ENCODE measurements at regions of chr15 and their contacts with region 1.

Region 1: GRCh38 chr15:40217159-40217824 is 21.6 kb upstream of the PAK6 start:
- DNase-seq: peak; percentile 62
- ATAC-seq: peak; percentile 86
- H3K4me3 Mint-ChIP-seq: no peak overlapping the region
- H3K27ac Mint-ChIP-seq: no peak overlapping the region
- H3K4me1 Mint-ChIP-seq: no peaks in the 10 kb centered on the region
- H3K27me3 Mint-ChIP-seq: no peaks in the 10 kb centered on the region

Region 2: DNA sequence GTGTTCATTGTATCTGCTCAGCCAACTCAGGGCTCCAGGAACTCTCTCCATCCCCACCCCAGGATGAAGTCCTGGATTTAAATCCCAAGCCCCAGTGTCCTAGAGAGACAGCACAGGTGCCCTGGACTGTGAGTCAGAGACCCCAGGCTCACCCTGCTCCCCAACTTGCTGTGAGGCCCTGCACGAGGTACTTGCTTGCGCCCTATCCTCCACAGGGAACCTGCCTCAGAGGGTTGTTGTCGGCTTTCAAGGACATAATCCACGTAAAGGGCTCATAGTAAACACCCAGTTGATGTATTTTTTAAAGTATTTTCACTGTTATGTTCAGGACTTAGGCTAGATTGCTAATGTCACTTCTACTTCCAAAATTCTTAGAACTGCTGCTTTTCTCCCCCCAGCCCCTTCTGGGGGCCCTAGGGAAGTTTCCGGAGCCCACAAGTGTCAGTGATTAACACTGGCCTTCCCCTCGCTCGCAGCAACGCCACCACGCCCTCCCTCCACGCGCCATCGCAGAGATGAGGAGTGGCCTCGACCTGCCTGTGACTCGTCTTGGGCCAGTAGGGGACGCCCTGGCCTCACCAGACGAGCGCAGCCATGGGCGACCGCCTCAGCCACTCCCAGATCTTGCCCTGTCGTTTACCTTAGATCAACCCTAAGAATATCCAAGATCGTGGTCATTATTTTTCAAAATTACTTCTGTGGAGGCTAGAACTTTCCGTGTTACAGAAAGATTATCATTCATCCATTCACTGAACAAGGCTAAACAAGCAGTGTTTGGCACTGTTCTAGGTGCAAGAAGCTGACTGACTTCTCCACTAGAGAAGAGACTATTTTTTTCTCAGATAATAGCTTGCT is 172.3 kb before region 1 on chr15:
- CTCF ChIA-PET with region 1: interaction called, 37 read pairs
- POLR2A ChIA-PET with region 1: no interaction called
- DNase-seq: peak; percentile 88
- ATAC-seq: peak; percentile 92
- H3K4me3 Mint-ChIP-seq: peak overlapping the region; percentile 9
- H3K27ac Mint-ChIP-seq: peak overlapping the region; percentile 53
- H3K4me1 Mint-ChIP-seq: peaks cover 76% of the 10 kb centered on the region
- H3K27me3 Mint-ChIP-seq: no peaks in the 10 kb centered on the region

Region 3: GRCh38 chr15:40150163-40150925 is 66.9 kb before region 1 on chr15:
- CTCF ChIA-PET with region 1: no interaction called
- POLR2A ChIA-PET with region 1: no interaction called
- DNase-seq: no peak
- ATAC-seq: no peak
- H3K4me3 Mint-ChIP-seq: no peak overlapping the region
- H3K27ac Mint-ChIP-seq: no peak overlapping the region
- H3K4me1 Mint-ChIP-seq: no peaks in the 10 kb centered on the region
- H3K27me3 Mint-ChIP-seq: peaks cover 18% of the 10 kb centered on the region

Region 4: GRCh38 chr15:40182358-40183029 is 34.8 kb before region 1 on chr15:
- CTCF ChIA-PET with region 1: interaction called, 19 read pairs
- POLR2A ChIA-PET with region 1: no interaction called
- DNase-seq: no peak
- ATAC-seq: peak; percentile 11
- H3K4me3 Mint-ChIP-seq: no peak overlapping the region
- H3K27ac Mint-ChIP-seq: peak overlapping the region; percentile 80
- H3K4me1 Mint-ChIP-seq: peaks cover 31% of the 10 kb centered on the region
- H3K27me3 Mint-ChIP-seq: no peaks in the 10 kb centered on the region

Region 5: GRCh38 chr15:40204100-40204499 is 13.2 kb before region 1 on chr15:
- CTCF ChIA-PET with region 1: interaction called, 25 read pairs
- POLR2A ChIA-PET with region 1: no interaction called
- DNase-seq: no peak
- ATAC-seq: no peak
- H3K4me3 Mint-ChIP-seq: no peak overlapping the region
- H3K27ac Mint-ChIP-seq: no peak overlapping the region
- H3K4me1 Mint-ChIP-seq: no peaks in the 10 kb centered on the region
- H3K27me3 Mint-ChIP-seq: no peaks in the 10 kb centered on the region

Region 6: DNA sequence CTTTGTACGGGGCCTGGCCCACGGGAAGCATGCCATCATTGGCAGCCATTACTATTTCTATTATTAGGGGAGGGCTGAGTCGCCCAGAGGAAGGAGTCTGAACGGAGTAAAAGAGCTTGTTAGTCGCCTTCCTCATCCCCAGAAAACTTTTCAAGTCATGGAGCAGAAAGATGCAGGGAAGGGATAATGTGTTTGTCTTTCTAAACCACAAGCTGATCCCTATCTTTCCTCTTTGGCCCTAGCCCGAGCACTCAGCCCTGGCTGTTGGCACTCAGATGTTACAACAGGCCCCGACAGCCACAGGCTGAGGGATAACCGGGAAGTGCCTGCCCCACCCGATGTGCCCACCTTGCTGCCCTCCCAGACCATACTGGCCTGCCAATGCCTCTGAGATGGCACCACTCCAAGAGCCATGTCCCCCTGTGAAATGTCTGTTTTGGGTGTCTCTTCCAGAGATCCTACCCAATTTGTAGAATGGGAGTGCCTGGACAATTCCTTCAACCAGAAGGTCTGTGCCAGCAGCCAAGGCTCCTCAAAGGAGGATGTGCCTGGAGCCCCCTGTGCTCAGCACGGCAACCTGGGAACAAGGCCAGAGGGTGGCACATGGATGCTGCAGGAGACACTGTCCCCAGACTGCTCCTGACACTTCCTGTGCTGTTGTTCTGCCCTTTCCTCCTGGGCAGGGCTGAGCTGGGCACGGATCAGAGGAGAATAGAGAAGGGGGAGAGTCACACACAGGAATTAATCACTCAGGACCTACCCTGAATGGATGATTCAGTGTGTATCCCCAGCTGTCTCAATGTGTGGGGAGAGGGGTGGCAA is 32.4 kb after region 1 on chr15:
- CTCF ChIA-PET with region 1: interaction called, 16 read pairs
- POLR2A ChIA-PET with region 1: no interaction called
- DNase-seq: no peak
- ATAC-seq: no peak
- H3K4me3 Mint-ChIP-seq: no peak overlapping the region
- H3K27ac Mint-ChIP-seq: no peak overlapping the region
- H3K4me1 Mint-ChIP-seq: peaks cover 13% of the 10 kb centered on the region
- H3K27me3 Mint-ChIP-seq: peaks cover 37% of the 10 kb centered on the region

Measured in activated CD8-positive, alpha-beta T cell treated with anti-CD3 and anti-CD28 coated beads, Interleukin-2, amount 10 ng/mL, durations not matched to agents 7 days and 5 days (primary cell).